Tibial artery (tissue), 4 donors: ENCODE measurements at regions of chr7 and their contacts with region 1.

Region 1: DNA sequence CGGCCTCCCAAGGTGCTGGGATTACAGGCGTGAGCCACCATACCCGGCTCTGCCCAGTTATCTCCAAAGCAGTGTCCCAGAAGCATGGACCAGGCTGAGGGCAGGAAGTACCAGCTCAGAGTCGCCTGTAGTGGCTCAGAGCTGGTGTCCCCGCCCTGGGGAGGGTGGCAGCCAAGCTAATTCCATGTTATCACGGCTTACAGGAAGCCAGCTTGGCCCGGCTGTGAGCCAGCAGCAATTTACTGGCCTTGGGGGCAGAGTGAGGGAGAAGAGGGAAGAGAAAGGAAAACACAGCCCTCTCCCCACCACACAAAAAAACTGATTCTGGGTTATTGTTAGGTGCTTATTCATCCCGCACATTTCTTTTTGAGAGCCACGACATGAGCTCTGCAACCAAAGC is 88.1 kb downstream of the HIP1 start:
- DNase-seq: peak; percentile 52 to 85
- H3K4me3 ChIP-seq: no peak overlapping the region
- H3K27ac ChIP-seq: peak overlapping the region; percentile 43 to 78
- H3K4me1 ChIP-seq: peaks cover 0 to 61% (median 36%) of the 10 kb centered on the region in 4 donors
- H3K27me3 ChIP-seq: no peaks in the 10 kb centered on the region
- CTCF ChIP-seq: no peak

Region 2: DNA sequence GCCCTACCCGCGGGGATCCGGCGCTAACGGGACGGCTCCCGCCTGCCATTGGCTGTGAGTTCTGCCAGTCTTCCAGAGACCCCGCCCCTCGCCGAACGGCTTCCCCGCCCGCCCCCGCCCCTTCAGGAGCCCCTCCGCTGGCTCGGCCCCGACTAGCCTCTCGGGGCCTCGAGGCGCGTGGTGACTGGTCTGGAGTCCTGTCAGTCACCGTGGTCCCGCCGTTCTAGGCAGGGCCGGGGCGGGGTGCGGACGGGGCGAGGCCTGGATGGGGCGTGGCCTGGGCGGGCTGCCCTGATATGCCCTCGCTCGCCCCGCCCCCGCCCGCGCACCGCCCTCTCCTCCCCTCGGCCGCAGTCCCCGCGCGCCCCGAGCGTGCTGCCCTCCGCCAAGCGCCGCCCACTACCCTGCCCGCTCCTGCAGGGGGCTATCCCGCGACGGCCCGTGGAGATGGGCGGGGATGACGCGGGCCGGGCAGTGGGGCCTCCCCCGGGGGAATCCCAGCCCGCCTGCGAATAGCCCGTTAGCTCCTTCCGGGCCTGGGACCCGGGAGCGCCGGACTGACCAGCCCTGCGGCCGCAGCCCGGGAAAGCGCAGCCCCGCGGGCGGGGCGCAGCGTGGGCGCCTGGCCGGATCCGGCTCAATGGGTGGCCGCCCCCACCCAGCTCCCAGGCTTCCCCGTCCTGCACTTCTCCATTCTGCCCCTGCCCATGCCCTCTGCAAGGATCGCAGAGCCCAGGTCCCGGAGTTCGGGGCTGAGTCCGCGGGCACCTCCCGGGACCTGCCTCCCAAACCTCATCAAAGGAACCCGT is 88.5 kb after region 1 on chr7:
- intact Hi-C with region 1: loop called (anchors 10 kb)
- DNase-seq: peak; percentile 99 to 100
- H3K4me3 ChIP-seq: peak overlapping the region; percentile 99 to 100
- H3K27ac ChIP-seq: peak overlapping the region; percentile 89 to 95
- H3K4me1 ChIP-seq: peaks cover 4 to 40% (median 23%) of the 10 kb centered on the region in 4 donors
- H3K27me3 ChIP-seq: no peaks in the 10 kb centered on the region
- CTCF ChIP-seq: peak; percentile 11 to 39

Region 3: GRCh38 chr7:76011442-76011861 is 360.8 kb after region 1 on chr7:
- intact Hi-C with region 1: no loop called
- DNase-seq: peak in 1 of 2 donors; percentile 67
- H3K4me3 ChIP-seq: no peak overlapping the region
- H3K27ac ChIP-seq: peak overlapping the region; percentile 51 to 67
- H3K4me1 ChIP-seq: peaks cover 0 to 19% (median 3%) of the 10 kb centered on the region in 4 donors
- H3K27me3 ChIP-seq: no peaks in the 10 kb centered on the region
- CTCF ChIP-seq: no peak